Aorta (tissue), 5 donors: ENCODE measurements at regions of chr1 and their contacts with region 1.

Region 1: DNA sequence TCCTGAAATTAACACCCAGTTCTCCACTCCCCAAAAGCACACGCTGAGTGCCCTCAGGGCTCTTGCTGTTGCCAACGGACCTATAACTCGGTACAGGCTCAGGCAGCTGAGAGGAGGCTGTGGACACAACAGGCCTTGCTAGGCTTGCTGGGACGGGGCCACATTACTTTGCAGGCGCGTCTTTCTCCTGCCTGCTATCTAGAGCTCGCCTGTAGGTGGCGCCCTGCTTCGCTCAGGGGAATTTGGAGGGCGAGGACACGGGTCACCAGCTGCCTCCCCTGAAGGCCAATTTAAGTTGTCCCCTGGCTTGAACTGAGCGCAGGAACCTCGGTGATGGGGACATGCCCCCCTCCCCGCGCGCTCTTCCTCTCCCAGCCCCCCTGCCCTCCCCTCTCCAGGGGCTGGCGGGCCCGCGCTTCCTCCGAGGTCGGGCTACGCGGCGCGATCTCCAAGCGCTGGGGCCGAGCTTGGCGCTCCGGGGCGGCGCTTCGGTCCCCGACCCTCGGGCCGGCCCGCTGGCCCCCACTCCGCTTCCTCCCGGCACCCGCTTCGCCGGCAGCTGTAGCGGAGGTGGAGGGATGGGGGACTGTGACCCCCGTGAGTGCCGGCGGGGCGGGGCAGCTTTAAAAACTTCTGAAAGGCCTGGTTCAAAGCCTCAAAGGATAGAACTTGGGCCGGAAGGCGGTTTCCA is 32.4 kb upstream of the NFIA start:
- DNase-seq: peak; percentile 96 to 98
- ATAC-seq: peak; percentile 91
- H3K4me3 ChIP-seq: peak overlapping the region; percentile 83 to 93
- H3K27ac ChIP-seq: peak overlapping the region; percentile 86 to 96
- H3K4me1 ChIP-seq: peaks cover 0 to 6% of the 10 kb centered on the region in 2 donors
- H3K27me3 ChIP-seq: no peaks in the 10 kb centered on the region

Region 2: GRCh38 chr1:60969971-60970509 is 80.0 kb before region 1 on chr1:
- intact Hi-C with region 1: loop called in 1 of 2 experiments (anchors 2 kb)
- DNase-seq: no peak
- ATAC-seq: peak; percentile 78
- H3K4me3 ChIP-seq: no peak overlapping the region
- H3K27ac ChIP-seq: peak overlapping the region; percentile 49 to 74
- H3K4me1 ChIP-seq: peaks cover 6 to 12% of the 10 kb centered on the region in 2 donors
- H3K27me3 ChIP-seq: no peaks in the 10 kb centered on the region

Region 3: GRCh38 chr1:61084491-61085031 is 34.6 kb after region 1 on chr1:
- intact Hi-C with region 1: loop called (anchors 2 to 5 kb)
- DNase-seq: no peak
- ATAC-seq: no peak
- H3K4me3 ChIP-seq: peak overlapping the region; percentile 97
- H3K27ac ChIP-seq: peak overlapping the region; percentile 59 to 99
- H3K4me1 ChIP-seq: no peaks in the 10 kb centered on the region
- H3K27me3 ChIP-seq: no peaks in the 10 kb centered on the region

Region 4: DNA sequence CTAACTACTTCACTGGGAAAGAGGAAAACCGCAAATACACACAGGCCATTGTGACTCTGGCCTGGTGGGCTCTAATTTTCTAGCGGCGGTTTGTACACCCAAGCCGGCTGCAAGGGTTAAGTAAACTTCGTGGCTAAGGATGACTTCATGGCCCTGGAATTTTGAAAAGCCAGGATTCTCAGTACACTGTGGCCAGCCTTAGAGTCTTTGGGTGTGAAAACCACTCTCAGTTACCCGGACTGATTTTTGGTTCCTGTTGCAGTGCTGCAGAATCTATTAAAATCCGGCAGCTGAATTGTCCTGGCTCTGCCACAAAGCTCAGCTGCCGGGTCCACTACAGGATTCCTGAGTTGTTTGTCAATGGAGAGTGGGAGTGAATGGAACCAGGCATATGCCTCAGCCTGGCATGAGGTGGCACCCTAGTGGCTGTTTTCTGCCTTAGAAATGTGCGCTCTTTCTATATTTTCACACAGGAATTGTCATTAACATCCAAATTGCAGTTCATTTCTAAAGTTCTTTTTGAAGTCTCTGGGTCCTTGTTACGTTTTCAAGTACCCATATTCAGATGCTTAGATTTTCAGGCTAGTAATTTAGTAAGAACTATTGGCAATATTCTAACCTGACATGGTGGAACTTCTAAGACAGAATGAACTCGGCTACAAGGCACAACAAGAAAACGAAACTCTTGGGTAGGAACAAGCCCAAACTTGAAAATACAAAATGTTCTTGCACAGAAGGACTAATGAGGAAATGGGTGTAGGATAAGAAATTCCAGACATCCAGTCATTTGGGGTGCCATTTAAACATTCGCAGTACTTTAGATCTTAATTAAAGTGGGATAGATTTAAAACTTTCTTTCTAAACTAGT is 288.2 kb after region 1 on chr1:
- intact Hi-C with region 1: loop called (anchors 2 to 5 kb)
- DNase-seq: peak; percentile 84
- ATAC-seq: peak; percentile 91
- H3K4me3 ChIP-seq: peak overlapping the region in 1 of 2 donors; percentile 48
- H3K27ac ChIP-seq: peak overlapping the region; percentile 94 to 99
- H3K4me1 ChIP-seq: peaks cover 4% of the 10 kb centered on the region in 2 donors
- H3K27me3 ChIP-seq: no peaks in the 10 kb centered on the region

Region 5: GRCh38 chr1:61641578-61642336 is 591.8 kb after region 1 on chr1:
- intact Hi-C with region 1: loop called in 1 of 2 experiments (anchors 10 kb)
- DNase-seq: peak; percentile 87 to 93
- ATAC-seq: peak; percentile 91
- H3K4me3 ChIP-seq: no peak overlapping the region
- H3K27ac ChIP-seq: peak overlapping the region; percentile 76 to 98
- H3K4me1 ChIP-seq: peaks cover 5 to 17% of the 10 kb centered on the region in 2 donors
- H3K27me3 ChIP-seq: no peaks in the 10 kb centered on the region

Region 6: DNA sequence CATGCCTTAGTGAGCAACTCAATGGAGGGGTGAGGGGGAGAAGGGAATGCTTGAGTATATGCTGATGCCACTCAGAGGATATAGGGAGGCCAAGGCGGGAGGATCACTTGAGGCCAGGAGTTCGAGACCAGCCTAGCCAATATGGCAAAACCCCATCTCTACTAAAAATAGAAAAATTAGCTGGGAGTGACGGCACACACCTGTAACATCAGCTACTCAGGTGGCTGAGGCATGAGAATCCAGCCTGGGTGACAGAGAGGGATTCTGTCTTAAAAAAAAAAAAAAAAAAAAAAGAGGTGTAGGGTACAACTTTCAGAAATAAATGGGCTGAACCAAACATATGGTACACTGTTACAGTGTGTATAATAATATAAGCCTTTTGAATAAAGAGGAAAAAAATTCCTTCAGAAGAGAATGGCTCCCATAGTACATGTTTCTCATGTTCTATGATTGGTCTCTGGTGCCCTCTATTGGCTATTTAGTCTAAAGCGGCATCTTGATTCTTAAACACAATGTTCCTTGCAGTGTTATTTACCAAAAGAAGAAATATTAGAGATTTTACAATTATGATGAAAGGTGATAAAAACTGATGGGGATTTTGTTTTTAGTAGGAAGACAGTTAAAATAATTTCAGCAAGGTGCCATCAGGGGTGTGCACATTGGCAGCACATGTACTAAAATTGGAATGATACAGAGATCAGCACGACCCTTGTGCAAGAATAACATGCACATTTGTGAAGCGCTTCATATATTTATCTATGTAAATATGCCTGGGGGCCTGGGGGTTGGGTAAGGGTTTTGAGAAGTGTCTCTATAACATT is 802.1 kb after region 1 on chr1:
- intact Hi-C with region 1: loop called (anchors 2 to 5 kb)
- DNase-seq: no peak
- ATAC-seq: peak; percentile 81
- H3K4me3 ChIP-seq: no peak overlapping the region
- H3K27ac ChIP-seq: no peak overlapping the region
- H3K4me1 ChIP-seq: no peaks in the 10 kb centered on the region
- H3K27me3 ChIP-seq: no peaks in the 10 kb centered on the region